ENCODE measurements at regions of chr18 and their contacts with region 1.

Region 1: DNA sequence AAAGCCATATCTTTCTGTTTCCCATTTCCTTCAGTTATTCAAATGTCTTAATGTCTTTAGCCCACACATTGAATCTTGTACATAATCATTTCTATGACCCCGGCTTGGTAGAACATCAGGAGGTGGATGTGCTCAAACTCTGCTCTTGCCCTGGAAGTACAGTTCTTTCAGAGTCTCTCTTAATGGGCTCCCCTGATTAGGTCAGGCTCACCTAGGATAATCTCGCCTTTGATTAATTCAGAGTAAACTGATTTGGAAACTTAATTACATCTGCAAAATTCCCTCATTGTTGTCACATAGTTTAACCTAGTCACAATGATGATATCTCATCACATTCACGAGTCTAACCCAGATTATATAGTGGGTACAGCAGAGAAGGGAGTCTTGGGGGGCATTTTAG is 135.4 kb downstream of the FHOD3 start:
- DNase-seq: no peak
- H3K4me3 ChIP-seq: no peak overlapping the region
- H3K4me3 Mint-ChIP-seq: no peak overlapping the region
- H3K27ac ChIP-seq: no peak overlapping the region
- H3K27ac Mint-ChIP-seq: no peak overlapping the region
- H3K4me1 ChIP-seq: no peaks in the 10 kb centered on the region
- H3K4me1 Mint-ChIP-seq: no peaks in the 10 kb centered on the region
- H3K27me3 ChIP-seq: no peaks in the 10 kb centered on the region
- H3K27me3 Mint-ChIP-seq: peaks cover 0 to 5% (median 1%) of the 10 kb centered on the region in 3 donors
- CTCF ChIP-seq: no peak

Region 2: GRCh38 chr18:36372903-36373311 is 60.0 kb before region 1 on chr18:
- intact Hi-C with region 1: loop called in 1 of 2 experiments (anchors 10 kb)
- DNase-seq: no peak
- H3K4me3 ChIP-seq: no peak overlapping the region
- H3K4me3 Mint-ChIP-seq: peak overlapping the region in 1 of 2 donors; percentile 58
- H3K27ac ChIP-seq: no peak overlapping the region
- H3K27ac Mint-ChIP-seq: peak overlapping the region in 1 of 7 donors; percentile 20
- H3K4me1 ChIP-seq: no peaks in the 10 kb centered on the region
- H3K4me1 Mint-ChIP-seq: peaks cover 9% of the 10 kb centered on the region
- H3K27me3 ChIP-seq: peaks cover 20 to 31% of the 10 kb centered on the region in 2 donors
- H3K27me3 Mint-ChIP-seq: peaks cover 31 to 64% (median 59%) of the 10 kb centered on the region in 3 donors
- CTCF ChIP-seq: no peak